ENCODE measurements at regions of chr3 and their contacts with region 1.

Region 1: DNA sequence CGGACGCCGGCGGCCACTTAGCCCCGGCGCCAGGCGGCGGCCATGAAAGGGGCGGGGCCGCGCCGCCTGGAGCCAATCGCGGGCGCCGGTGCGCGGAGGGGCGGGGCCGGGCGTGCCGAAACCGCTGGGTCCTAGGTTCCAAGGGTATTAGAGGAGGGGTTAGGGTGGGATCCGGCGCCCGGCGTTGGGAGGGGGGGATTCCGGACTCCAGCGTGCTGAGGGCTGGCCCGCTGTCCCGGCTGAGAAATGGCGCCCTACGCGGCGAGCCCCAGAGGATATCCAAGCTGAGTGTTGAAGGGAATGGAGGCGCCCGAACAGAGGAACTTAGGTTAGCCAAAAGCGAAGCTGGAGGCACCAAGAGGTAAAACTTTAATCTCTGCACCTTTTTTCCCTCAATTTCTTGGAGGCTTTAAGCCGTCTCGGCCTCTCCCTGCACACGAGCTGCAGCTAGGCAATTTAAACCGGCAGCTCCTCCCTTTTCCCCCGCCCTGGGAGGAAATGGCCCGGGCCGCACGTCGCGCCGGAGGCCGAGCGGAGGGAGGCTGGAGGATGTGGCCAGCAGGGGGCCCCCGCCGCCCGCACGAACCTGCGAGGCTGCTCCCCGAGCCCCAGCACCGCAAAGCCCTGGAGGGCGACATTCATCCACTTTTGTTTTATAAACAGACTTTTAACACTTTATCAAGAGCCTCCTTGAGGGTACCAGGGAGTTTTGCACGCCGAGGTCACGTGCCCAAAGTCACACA is at the start of gene XXYLT1:
- ATAC-seq: peak; percentile 76 to 90 (median 88)
- H3K4me3 ChIP-seq: peak within 1 kb of the TSS; percentile 82 to 99 (median 96)
- H3K27ac ChIP-seq: peak within 1 kb of the TSS; percentile 86 to 93
- H3K4me1 ChIP-seq: peaks cover 12 to 15% of the 10 kb centered on the region in 2 donors
- total RNA-seq, gene XXYLT1: 8.7 to 35.9 (median 16.1) TPM

Region 2: GRCh38 chr3:195522254-195523023 is 251.2 kb after region 1 on chr3:
- in situ Hi-C with region 1: loop called in 6 of 9 experiments (anchors 10 to 25 kb)
- ATAC-seq: no peak
- H3K4me3 ChIP-seq: no peak overlapping the region
- H3K27ac ChIP-seq: no peak overlapping the region
- H3K4me1 ChIP-seq: no peaks in the 10 kb centered on the region

Region 3: DNA sequence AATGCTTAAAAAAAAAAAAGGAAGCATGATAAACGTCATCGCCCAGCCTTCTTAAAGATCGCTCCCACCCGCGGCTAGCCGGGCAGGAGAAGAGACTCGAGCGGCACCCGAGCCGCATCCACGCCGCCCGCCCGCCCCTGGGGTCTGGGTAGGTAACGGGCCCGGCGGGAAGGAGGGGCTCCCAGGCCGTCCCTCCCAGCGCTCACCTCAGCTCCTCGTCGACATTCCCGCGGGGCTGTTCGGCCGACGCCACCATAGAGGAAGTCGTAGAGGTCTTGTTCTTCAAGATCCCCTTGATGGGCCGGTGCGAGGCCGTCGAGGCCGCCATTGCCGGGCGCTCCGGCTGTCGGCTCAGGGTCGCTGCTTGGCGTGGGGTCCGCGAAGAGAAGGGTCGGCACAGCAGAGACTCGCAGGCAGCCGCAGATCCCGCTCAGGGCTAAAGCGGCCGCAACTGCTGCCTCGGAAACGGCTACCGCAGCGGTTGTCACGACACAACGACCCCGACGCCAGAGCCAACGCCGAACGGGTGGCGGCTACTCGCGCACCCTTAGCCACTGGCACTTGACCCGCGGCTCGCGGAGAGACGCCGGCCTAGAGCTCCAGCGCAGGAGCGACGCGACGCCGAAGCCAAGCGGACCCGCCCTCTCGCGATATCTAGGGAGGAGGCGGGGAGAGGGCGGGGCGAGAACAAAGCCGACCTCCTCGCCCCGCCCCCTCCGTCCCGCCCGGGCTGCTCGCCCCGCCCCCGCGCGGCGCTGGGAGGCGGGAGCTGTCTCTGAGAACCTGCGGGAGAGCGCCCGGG is 271.6 kb after region 1 on chr3 and contains the start of gene PPP1R2:
- in situ Hi-C with region 1: loop called in 2 of 9 experiments (anchors 25 kb)
- ATAC-seq: peak; percentile 85 to 96 (median 90)
- H3K4me3 ChIP-seq: peak within 1 kb of the TSS; percentile 53 to 84 (median 82)
- H3K27ac ChIP-seq: peak within 1 kb of the TSS; percentile 79 to 88
- H3K4me1 ChIP-seq: peaks cover 19 to 27% of the 10 kb centered on the region in 2 donors
- total RNA-seq, gene PPP1R2: 28.0 to 65.0 (median 36.9) TPM